Mammary epithelial cell (primary cell): ENCODE measurements at regions of chr2 and their contacts with region 1.

Region 1: DNA sequence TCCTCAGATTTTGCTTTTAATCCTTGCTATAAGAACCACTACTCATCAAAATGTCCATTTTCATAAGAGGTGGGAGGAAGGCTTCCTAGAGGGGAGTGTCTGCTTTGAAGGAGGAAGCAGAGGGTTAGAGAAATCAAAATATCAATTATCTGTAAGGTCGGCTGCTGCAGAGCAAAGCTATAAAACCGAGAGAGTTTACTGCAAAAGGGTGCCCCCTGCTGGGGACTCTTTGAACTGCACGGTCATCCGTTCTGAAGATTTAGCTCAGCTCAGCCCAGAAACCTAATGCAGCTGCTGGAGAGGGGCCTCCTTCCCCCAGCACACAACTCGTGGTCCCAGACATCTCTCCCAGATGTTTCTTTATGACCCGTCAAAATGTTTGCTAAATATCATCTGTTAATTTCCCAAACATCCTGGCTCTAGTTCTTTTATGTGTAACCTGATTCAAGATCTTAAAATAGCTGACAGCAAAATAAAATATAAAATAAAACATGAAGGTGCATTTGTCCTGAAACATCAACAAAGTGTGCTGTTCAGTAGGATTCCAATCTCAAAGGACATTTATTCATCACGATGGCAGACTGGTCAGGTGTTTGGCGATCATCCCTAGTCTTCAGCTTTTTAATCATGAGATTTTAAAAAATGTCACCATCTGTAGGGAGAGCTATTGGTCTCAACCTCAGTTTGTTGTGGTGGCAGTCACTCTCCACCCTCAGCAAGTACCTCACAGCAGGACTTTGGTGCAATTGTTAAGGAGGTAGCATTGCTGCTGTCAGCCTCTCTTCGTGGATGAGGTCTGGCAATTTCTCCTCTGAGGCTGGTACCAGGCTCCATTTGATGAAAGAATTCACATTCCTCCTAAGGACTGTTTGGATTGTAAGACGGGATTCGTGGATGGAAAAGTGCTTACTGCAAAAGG is 185.9 kb downstream of the MTX2 start:
- DNase-seq: peak; percentile 31
- H3K4me3 ChIP-seq: no peak overlapping the region
- H3K27ac ChIP-seq: no peak overlapping the region
- H3K4me1 ChIP-seq: no peaks in the 10 kb centered on the region
- H3K27me3 ChIP-seq: no peaks in the 10 kb centered on the region
- CTCF ChIP-seq: peak; percentile 86 to 94

Region 2: DNA sequence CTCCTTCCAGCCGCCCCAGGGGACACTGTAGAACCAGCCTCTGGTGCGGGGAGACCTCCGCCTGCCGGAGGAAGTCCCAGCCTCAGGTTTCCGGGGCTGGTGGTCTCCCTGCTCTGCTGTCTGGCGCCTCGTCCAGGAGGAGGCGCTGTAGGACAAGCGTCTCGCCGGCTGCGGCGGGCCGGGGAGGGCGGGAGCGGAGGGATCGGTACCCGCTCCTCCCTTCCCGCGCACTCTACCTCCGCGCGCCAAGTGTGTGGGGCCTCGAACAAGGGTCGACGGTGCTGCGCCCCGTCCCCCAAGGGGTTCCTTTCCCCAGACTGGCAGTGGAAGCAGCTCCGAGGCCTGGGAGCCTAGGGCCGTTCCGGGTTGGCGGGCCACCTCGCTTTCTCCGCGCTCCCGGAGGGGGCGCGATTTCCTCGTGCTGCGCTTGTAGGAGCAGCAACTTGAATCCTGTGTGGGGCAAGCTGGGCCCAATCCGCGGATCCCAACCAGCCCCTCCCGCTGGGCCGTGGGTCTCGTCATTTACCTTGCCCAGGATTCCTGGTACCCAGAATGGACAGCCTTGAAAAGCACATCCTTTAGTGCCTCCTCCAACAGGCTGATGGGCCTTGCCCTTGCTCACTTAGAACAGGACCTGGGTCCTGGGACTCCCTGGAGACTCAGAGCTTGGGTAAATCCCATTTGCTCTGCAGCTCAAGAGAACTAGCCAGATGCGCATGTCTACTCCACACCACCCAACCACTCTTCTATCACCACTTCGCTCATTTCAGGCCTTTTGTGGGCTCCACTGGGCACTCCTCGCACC is 314.4 kb before region 1 on chr2:
- CTCF ChIA-PET with region 1: interaction called, 32 read pairs
- dilution Hi-C with region 1: no loop called
- in situ Hi-C with region 1: loop called (anchors 5 to 10 kb)
- intact Hi-C with region 1: loop called (anchors 1 kb)
- DNase-seq: peak; percentile 53
- H3K4me3 ChIP-seq: peak overlapping the region; percentile 65 to 74 (median 70)
- H3K27ac ChIP-seq: no peak overlapping the region
- H3K4me1 ChIP-seq: peaks cover 15% of the 10 kb centered on the region
- H3K27me3 ChIP-seq: peaks cover 29% of the 10 kb centered on the region
- CTCF ChIP-seq: peak; percentile 57 to 87

Region 3: DNA sequence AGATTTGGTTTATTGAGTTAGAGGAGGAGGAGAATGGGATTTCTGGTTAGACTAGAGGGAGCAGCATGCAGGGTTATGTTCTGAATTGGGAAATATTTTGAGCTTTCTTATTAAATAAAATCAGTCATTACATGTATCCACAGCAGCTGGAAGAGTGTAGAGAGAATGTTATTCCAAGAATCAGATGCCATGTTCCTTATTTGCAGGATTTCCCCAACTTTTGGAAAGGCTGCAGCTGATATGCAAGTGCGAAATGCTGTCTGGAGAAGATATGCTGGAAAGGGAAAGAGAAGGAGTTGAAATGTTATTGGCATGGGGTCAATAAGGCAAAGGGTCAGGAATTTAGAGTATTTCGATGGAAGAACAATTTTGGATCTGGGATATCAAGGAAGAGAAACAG is 69.9 kb after region 1 on chr2:
- CTCF ChIA-PET with region 1: interaction called, 10 read pairs
- dilution Hi-C with region 1: no loop called
- in situ Hi-C with region 1: no loop called
- intact Hi-C with region 1: no loop called
- DNase-seq: no peak
- H3K4me3 ChIP-seq: no peak overlapping the region
- H3K27ac ChIP-seq: no peak overlapping the region
- H3K4me1 ChIP-seq: no peaks in the 10 kb centered on the region
- H3K27me3 ChIP-seq: peaks cover 5% of the 10 kb centered on the region
- CTCF ChIP-seq: no peak

Region 4: DNA sequence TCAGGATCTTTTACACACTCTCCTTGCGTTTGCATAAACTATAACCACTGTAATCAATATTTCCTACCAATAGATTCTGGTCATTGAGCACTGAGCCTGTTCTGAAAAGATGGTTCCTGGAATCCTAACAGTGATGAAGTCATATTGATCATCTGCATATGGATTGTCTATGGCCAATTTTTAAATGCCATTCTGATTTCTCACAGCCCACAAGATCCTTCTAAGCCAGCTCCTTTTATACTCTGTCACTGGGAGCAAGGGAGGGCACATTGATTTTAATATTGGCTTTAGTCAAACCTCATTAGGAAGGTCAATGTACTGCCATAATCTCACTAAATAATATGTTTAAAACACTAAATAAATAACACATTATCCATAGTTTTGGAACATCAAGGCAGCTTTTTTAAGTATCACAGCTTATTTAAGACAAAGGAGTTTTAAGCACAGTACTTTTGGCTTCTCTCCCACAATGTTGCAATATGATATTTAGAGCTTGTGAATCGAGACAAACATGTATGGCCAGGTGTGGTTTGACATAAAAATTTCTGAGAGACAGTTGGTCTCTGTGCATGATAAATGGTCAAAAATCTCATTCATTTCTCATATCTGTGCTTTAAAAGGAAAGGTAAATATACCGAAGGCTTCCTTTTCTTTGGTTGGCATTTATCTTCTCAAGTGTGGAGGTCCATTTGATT is 81.4 kb after region 1 on chr2:
- CTCF ChIA-PET with region 1: interaction called, 13 read pairs
- dilution Hi-C with region 1: no loop called
- in situ Hi-C with region 1: no loop called
- intact Hi-C with region 1: no loop called
- DNase-seq: peak; percentile 63
- H3K4me3 ChIP-seq: no peak overlapping the region
- H3K27ac ChIP-seq: no peak overlapping the region
- H3K4me1 ChIP-seq: peaks cover 4% of the 10 kb centered on the region
- H3K27me3 ChIP-seq: no peaks in the 10 kb centered on the region
- CTCF ChIP-seq: no peak

Region 5: GRCh38 chr2:176554101-176555048 is 99.2 kb after region 1 on chr2:
- CTCF ChIA-PET with region 1: interaction called, 17 read pairs
- dilution Hi-C with region 1: no loop called
- in situ Hi-C with region 1: no loop called
- intact Hi-C with region 1: loop called (anchors 1 kb)
- DNase-seq: peak; percentile 34
- H3K4me3 ChIP-seq: peak overlapping the region; percentile 49 to 54 (median 49)
- H3K27ac ChIP-seq: no peak overlapping the region
- H3K4me1 ChIP-seq: peaks cover 16% of the 10 kb centered on the region
- H3K27me3 ChIP-seq: peaks cover 8% of the 10 kb centered on the region
- CTCF ChIP-seq: peak; percentile 58 to 73

Region 6: DNA sequence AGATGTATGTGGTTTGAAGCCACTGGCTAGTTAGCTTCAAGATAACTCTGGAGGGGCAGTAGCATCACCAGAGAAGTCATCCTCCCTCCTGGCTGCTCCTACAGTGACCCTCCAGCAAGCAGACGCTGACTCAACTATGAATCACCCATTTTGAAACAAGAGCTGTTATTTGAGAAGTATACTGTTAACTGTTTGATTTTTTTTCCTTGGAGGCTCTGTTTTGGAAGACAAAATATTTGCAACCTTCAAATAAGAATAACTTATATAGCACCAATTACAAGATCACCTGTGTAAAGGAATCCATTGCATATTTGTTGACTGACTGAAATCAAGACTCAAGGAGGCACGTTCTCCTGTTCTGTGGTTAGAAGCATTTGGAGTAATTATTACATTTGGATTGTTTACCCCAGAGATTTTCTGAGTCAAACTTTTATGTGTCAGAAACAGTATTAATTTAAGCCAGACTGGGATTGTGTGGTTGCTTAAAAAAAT is 127.9 kb after region 1 on chr2:
- CTCF ChIA-PET with region 1: no interaction called
- dilution Hi-C with region 1: no loop called
- in situ Hi-C with region 1: no loop called
- intact Hi-C with region 1: no loop called
- DNase-seq: peak; percentile 91
- H3K4me3 ChIP-seq: peak overlapping the region in 2 of 3 experiments; percentile 2 to 6
- H3K27ac ChIP-seq: peak overlapping the region; percentile 58
- H3K4me1 ChIP-seq: peaks cover 15% of the 10 kb centered on the region
- H3K27me3 ChIP-seq: no peaks in the 10 kb centered on the region
- CTCF ChIP-seq: no peak